OCI-LY7 (cell line): ENCODE measurements at regions of chr20 and their contacts with region 1.

Region 1: GRCh38 chr20:21235484-21236445 is 67.4 kb upstream of the XRN2 start:
- DNase-seq: peak; percentile 71
- H3K4me3 ChIP-seq: no peak overlapping the region
- H3K27ac ChIP-seq: no peak overlapping the region
- H3K4me1 ChIP-seq: no peaks in the 10 kb centered on the region
- CTCF ChIP-seq: peak; percentile 99

Region 2: DNA sequence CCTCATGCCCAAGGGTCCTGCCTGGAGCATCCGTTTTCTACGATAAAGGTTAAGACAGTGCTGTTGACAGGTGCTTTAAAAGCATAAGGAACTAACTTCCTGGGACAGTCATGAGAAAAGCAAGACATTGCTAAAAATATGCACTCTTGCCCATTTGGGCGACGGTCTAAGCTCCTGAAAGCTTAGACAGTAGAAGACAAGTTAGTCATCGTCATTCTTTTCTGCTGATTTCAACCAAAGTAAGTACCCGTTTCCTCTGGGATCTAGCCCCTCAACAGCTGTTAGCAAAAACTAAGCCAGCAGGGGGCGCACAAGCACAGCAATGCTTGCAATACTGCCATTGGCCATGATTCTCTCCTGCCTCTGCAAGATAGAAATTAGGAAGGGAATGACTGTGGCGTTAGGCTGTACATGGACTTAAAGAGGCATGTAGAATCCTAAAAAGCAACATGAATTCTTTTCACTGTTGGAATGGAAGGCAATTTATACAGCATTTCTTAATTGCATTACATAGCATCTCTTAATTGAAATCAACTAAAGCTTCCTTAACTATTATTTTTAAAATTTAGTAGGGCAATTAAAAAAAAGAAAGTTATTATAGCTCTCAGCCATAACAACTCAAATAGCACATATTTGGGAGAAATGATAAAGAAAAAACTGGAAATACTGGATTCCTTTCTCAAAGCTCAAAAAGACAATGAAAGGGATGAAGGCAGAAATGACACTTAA is 375.5 kb before region 1 on chr20:
- CTCF ChIA-PET with region 1: no interaction called
- POLR2A ChIA-PET with region 1: no interaction called
- intact Hi-C with region 1: loop called (anchors 10 kb)
- DNase-seq: peak; percentile 82
- H3K4me3 ChIP-seq: no peak overlapping the region
- H3K27ac ChIP-seq: no peak overlapping the region
- H3K4me1 ChIP-seq: no peaks in the 10 kb centered on the region
- CTCF ChIP-seq: peak; percentile 97

Region 3: GRCh38 chr20:21048841-21049273 is 186.9 kb before region 1 on chr20:
- CTCF ChIA-PET with region 1: no interaction called
- POLR2A ChIA-PET with region 1: no interaction called
- intact Hi-C with region 1: loop called (anchors 10 kb)
- DNase-seq: peak; percentile 42
- H3K4me3 ChIP-seq: no peak overlapping the region
- H3K27ac ChIP-seq: no peak overlapping the region
- H3K4me1 ChIP-seq: no peaks in the 10 kb centered on the region
- CTCF ChIP-seq: peak; percentile 91

Region 4: GRCh38 chr20:21505161-21505809 is 269.5 kb after region 1 on chr20:
- CTCF ChIA-PET with region 1: interaction called, 4 read pairs
- POLR2A ChIA-PET with region 1: no interaction called
- intact Hi-C with region 1: loop called (anchors 1 kb)
- DNase-seq: peak; percentile 60
- H3K4me3 ChIP-seq: no peak overlapping the region
- H3K27ac ChIP-seq: no peak overlapping the region
- H3K4me1 ChIP-seq: no peaks in the 10 kb centered on the region
- CTCF ChIP-seq: peak; percentile 96

Region 5: DNA sequence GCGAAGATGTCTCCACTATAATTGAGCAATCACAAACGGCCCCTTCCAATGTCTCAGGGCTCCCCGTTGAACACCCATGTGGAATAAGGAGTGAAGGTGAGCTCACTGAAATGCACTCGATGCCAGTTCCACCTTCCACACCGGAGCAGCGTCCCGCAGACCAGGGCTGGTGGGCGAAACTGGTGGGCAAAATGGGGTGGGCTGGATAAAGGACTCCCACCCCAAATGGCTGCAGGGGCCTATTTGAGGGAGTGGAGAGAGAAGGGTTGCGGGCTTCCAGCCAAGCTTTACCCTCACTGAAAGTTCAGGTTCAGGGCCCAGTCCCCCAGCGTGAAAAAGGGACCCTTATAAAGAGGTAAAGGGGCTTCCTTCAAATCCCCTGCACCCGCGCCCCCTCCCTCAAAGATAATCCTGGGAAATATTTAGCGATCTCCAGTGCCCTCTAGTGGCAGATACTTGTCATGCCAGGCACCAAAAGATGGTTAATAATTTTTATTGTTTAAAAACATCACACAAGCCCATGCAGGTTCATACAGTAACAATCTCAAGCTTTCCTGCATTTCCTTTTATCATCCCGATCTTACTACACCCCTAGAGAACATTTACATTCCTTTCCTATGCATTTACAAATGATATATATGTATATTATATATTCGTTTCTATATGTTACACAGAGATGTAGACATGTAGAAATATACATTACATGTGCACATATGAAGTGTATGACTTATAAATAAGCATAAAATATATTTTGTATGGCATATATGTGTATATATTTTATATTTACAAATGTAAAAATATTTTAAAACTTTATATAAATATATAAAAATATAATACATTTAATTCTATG is 336.3 kb after region 1 on chr20:
- CTCF ChIA-PET with region 1: interaction called, 3 read pairs
- POLR2A ChIA-PET with region 1: interaction called, 3 read pairs
- intact Hi-C with region 1: loop called (anchors 5 kb)
- DNase-seq: peak; percentile 40
- H3K4me3 ChIP-seq: no peak overlapping the region
- H3K27ac ChIP-seq: no peak overlapping the region
- H3K4me1 ChIP-seq: peaks cover 3% of the 10 kb centered on the region
- CTCF ChIP-seq: peak; percentile 96

Region 6: DNA sequence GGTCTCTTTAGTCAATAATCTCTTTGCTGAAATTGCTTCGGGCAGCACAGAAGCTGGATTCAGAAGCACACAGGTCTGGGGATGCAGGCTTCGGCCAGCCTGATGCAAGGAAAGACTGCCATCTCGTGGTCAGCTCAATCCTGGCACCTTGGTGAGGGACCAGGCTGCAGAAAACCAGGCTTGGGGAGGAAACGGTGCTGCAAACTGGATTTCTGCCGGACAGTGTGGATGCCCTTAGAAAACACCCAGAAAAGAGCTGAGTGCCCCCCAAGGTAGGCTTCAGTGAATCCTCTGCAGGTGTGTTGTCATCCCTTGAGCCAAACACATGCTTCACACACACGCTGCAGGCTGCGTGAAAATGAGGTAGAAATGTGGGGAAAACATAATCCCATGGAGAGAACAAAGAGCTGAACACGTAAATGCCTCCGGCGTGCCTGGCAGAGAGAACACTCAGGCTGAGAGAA is 379.9 kb after region 1 on chr20:
- CTCF ChIA-PET with region 1: no interaction called
- POLR2A ChIA-PET with region 1: no interaction called
- intact Hi-C with region 1: loop called (anchors 1 kb)
- DNase-seq: peak; percentile 71
- H3K4me3 ChIP-seq: no peak overlapping the region
- H3K27ac ChIP-seq: no peak overlapping the region
- H3K4me1 ChIP-seq: peaks cover 8% of the 10 kb centered on the region
- CTCF ChIP-seq: peak; percentile 94